Gastrocnemius medialis (tissue), 4 donors: ENCODE measurements at regions of chr2 and their contacts with region 1.

Region 1: DNA sequence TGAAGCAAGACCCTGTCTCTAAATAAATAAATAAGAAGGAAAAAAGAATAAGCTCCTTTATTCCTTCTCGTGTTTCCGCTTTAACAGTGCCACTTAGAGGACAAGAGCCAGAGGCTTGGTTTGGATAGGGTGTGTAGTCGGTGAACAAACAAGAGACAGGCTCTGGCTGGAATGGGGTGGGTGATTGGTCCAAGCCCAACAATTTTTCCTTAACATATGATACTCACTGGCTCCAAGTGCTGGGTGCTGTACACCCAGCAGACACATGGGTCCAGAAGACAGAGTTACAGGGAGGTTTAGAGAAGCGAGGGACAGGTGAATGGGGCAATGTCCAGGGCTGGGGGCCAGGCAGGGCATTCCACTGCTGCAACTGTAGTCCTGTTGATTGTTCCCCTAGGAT is 77.8 kb downstream of the NCAPH start:
- DNase-seq: peak; percentile 29 to 76
- ATAC-seq: peak; percentile 91 to 96
- H3K4me3 ChIP-seq: peak overlapping the region; percentile 52 to 69 (median 66)
- H3K27ac ChIP-seq: peak overlapping the region; percentile 77 to 88 (median 84)
- H3K4me1 ChIP-seq: peaks cover 0 to 7% of the 10 kb centered on the region in 2 donors
- H3K27me3 ChIP-seq: no peaks in the 10 kb centered on the region
- CTCF ChIP-seq: no peak
- POLR2A ChIP-seq: no peak

Region 2: DNA sequence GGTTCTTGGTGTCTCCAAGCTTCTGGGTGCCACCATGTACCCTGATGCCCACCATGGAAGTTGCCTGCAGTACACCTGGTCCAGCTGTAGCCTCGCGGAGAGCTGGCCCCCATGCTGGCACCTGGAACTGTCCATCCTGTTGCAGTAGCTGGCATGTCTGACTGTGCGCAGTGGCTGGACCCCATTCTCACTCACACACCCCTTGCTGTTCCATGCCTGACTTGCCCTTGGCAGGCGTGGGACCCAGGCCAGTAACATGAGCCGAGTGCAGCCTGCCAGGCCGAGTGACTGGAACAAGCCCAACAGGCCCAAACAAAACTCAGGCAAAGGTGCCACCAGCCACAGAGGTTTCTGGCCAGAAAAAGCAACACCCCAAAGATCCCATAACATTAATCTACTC is 18.0 kb after region 1 on chr2:
- in situ Hi-C with region 1: no loop called
- intact Hi-C with region 1: loop called (anchors 1 kb)
- DNase-seq: peak; percentile 52 to 79
- ATAC-seq: peak; percentile 69 to 93
- H3K4me3 ChIP-seq: no peak overlapping the region
- H3K27ac ChIP-seq: no peak overlapping the region
- H3K4me1 ChIP-seq: peaks cover 13 to 31% of the 10 kb centered on the region in 2 donors
- H3K27me3 ChIP-seq: no peaks in the 10 kb centered on the region
- CTCF ChIP-seq: no peak
- POLR2A ChIP-seq: no peak